ENCODE measurements at regions of chr1 and their contacts with region 1.

Region 1: GRCh38 chr1:8211589-8212442 is 106.1 kb upstream of the SLC45A1 start:
- DNase-seq: peak; percentile 92
- H3K4me3 ChIP-seq: no peak overlapping the region
- H3K27ac ChIP-seq: peak overlapping the region; percentile 85
- H3K4me1 ChIP-seq: peaks cover 17% of the 10 kb centered on the region
- H3K27me3 ChIP-seq: no peaks in the 10 kb centered on the region
- CTCF ChIP-seq: peak in 1 of 2 donors; percentile 14
- POLR2A ChIP-seq: peak; percentile 32

Region 2: DNA sequence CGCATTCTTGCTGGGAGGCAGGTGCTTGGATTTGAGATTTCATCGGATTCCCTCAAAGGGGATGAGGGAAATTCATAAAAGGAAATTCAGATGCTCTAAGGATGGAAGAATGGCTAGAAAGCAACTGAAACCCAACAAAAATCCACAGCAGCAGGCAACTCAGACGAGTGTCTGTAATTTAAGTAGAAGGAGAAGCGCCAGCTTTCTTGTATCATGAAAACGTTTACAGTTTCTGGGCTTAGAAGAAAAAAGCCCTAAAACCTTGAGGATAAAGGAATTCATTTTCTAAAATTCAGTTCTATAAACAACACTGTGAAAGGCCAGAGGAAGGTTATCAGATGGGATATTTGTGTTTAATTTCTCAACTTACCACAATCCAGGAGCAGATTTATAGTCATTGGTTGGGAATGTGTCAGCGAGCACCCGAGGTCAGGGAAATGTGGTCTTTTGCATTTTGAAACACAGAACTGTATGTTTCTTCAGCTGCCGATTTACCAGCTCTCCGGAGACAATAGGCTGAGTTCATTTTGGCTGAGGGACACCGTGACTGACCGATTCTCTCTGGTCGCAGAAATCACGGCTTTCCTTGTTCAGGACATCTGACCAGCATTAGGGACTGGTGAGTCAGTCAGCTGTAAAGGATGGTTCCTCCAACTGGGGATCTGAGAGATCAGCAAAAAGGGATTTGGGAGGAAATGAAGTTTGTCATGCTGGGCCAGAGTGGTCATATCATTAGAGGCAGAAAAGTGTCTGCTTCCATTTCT is 74.2 kb before region 1 on chr1:
- CTCF ChIA-PET with region 1: interaction called, 7 read pairs
- POLR2A ChIA-PET with region 1: no interaction called
- dilution Hi-C with region 1: no loop called
- intact Hi-C with region 1: loop called (anchors 1 kb)
- DNase-seq: peak; percentile 97
- H3K4me3 ChIP-seq: no peak overlapping the region
- H3K27ac ChIP-seq: peak overlapping the region; percentile 81
- H3K4me1 ChIP-seq: peaks cover 39% of the 10 kb centered on the region
- H3K27me3 ChIP-seq: no peaks in the 10 kb centered on the region
- CTCF ChIP-seq: no peak
- POLR2A ChIP-seq: no peak

Region 3: GRCh38 chr1:8197493-8198282 is 14.1 kb before region 1 on chr1:
- CTCF ChIA-PET with region 1: interaction called, 6 read pairs
- POLR2A ChIA-PET with region 1: no interaction called
- dilution Hi-C with region 1: no loop called
- intact Hi-C with region 1: loop called (anchors 2 kb)
- DNase-seq: peak; percentile 94
- H3K4me3 ChIP-seq: no peak overlapping the region
- H3K27ac ChIP-seq: peak overlapping the region; percentile 18
- H3K4me1 ChIP-seq: peaks cover 24% of the 10 kb centered on the region
- H3K27me3 ChIP-seq: no peaks in the 10 kb centered on the region
- CTCF ChIP-seq: no peak
- POLR2A ChIP-seq: peak; percentile 50